MCF 10A (cell line): ENCODE measurements at regions of chr15 and their contacts with region 1.

Region 1: GRCh38 chr15:101320501-101321052 is 25.5 kb upstream of the SNRPA1 start:
- DNase-seq: no peak
- H3K4me3 Mint-ChIP-seq: no peak overlapping the region
- H3K27ac Mint-ChIP-seq: no peak overlapping the region
- H3K4me1 Mint-ChIP-seq: peaks cover 14% of the 10 kb centered on the region
- H3K27me3 Mint-ChIP-seq: no peaks in the 10 kb centered on the region
- CTCF ChIP-seq: no peak

Region 2: DNA sequence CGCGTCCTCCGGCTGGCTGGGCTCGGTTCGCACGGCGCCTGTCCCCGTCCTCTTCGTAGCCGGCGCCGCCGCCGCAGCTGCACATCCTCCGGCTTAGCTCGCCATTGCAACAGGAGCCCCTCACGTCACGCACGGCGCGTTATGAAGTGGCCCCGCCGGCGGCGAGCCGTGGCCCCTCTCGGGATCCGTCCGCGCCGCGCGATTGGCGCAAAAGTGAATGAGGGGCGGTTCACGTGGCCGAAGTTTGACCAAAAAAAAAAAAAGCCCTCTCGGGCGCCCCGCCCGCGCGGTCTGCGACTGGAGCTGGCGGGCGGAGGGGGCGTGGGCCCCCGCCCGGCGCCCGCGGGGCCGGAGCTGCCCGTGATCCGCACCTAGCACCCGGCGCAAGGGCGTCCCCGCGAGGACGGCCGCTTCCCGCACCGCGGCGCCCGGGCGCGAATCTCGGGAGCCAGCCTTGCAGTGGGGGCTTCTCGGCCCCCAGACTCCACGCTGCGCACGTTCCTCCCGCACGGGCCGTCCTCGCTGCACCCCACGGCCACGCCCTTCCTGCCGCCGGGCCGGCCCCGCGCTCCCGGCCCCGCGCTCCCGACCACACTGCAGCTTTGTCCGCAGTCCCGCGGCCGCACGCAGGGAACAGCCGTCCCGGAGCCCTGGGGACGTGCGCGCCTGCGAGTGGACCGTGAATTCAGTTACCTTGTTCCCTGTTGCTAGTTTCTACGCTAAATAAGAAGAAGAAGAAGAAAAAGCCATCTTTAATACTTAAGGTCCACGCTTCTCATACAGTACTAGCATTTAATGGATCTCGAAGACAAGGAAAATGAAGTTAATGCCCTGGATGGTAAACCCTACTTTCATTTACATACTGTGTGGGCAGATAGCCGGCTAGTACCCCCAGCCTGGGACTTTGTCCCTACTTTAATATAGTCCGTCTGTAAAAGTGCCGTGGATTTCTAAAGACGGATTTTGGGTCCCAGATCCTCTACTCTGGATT is 68.5 kb before region 1 on chr15 and contains the start of gene CHSY1:
- CTCF ChIA-PET with region 1: no interaction called
- POLR2A ChIA-PET with region 1: no interaction called
- intact Hi-C with region 1: no loop called
- DNase-seq: peak; percentile 89
- H3K4me3 Mint-ChIP-seq: peak within 1 kb of the TSS; percentile 83
- H3K27ac Mint-ChIP-seq: peak within 1 kb of the TSS; percentile 71
- H3K4me1 Mint-ChIP-seq: peaks cover 19% of the 10 kb centered on the region
- H3K27me3 Mint-ChIP-seq: no peaks in the 10 kb centered on the region
- CTCF ChIP-seq: peak; percentile 12
- total RNA-seq, gene CHSY1: 24.3 and 29.8 TPM in 2 replicates

Region 3: GRCh38 chr15:101348643-101349548 is 28.3 kb after region 1 on chr15:
- CTCF ChIA-PET with region 1: interaction called, 3 read pairs
- POLR2A ChIA-PET with region 1: interaction called, 12 read pairs
- intact Hi-C with region 1: no loop called
- DNase-seq: peak; percentile 99
- H3K4me3 Mint-ChIP-seq: peak overlapping the region; percentile 35
- H3K27ac Mint-ChIP-seq: peak overlapping the region; percentile 66
- H3K4me1 Mint-ChIP-seq: peaks cover 24% of the 10 kb centered on the region
- H3K27me3 Mint-ChIP-seq: no peaks in the 10 kb centered on the region
- CTCF ChIP-seq: no peak

Region 4: DNA sequence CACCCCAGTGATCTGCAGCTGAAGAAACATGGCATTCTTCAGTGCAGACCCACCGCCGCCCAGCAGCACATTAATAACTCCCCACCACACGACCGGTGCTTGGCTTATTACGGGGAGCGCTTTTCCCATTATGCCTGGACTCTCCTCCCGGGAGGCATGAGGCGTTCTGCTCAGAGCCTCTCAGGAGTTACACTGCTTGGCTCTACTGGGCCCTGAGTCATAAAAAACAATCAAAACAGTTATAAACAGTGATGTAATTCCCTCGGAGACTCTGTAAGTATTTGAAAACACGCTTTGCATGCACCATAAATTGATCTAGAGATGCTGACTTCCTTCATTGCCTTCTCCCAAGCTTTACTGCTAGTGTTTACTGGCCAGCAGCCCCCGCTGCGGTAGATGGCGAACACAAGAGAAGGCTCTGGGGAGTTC is 51.6 kb after region 1 on chr15:
- CTCF ChIA-PET with region 1: no interaction called
- POLR2A ChIA-PET with region 1: no interaction called
- intact Hi-C with region 1: loop called (anchors 1 kb)
- DNase-seq: no peak
- H3K4me3 Mint-ChIP-seq: no peak overlapping the region
- H3K27ac Mint-ChIP-seq: no peak overlapping the region
- H3K4me1 Mint-ChIP-seq: no peaks in the 10 kb centered on the region
- H3K27me3 Mint-ChIP-seq: no peaks in the 10 kb centered on the region
- CTCF ChIP-seq: no peak